Mammary epithelial cell (primary cell): ENCODE measurements at regions of chr20 and their contacts with region 1.

Region 1: GRCh38 chr20:12925214-12925755 is 83.5 kb upstream of the SPTLC3 start:
- DNase-seq: peak; percentile 73
- H3K4me3 ChIP-seq: no peak overlapping the region
- H3K27ac ChIP-seq: no peak overlapping the region
- H3K4me1 ChIP-seq: peaks cover 31% of the 10 kb centered on the region
- H3K27me3 ChIP-seq: no peaks in the 10 kb centered on the region
- CTCF ChIP-seq: peak; percentile 86 to 98

Region 2: GRCh38 chr20:11331096-11331495 is 1594.2 kb before region 1 on chr20:
- CTCF ChIA-PET with region 1: no interaction called
- dilution Hi-C with region 1: no loop called
- in situ Hi-C with region 1: no loop called
- intact Hi-C with region 1: no loop called
- DNase-seq: peak; percentile 83
- H3K4me3 ChIP-seq: no peak overlapping the region
- H3K27ac ChIP-seq: no peak overlapping the region
- H3K4me1 ChIP-seq: peaks cover 8% of the 10 kb centered on the region
- H3K27me3 ChIP-seq: no peaks in the 10 kb centered on the region
- CTCF ChIP-seq: no peak

Region 3: DNA sequence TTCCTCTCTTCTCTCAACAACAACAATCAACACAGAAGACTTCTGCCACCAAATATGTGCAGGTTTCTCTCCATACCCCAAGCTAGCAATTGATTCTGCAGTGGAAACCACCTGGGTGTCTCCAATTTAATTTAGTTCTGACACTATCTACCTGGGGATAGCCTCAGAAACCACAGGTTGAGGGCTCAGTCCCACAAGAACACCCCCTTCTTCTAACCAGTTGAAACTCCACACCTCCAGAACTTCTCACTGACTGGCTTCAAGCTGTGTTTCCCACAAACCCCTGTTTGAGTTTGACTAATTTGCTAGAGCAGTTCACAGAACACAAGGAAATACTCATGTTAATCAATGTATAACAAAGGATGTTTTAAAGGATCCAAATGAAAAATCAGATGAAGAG is 31.0 kb after region 1 on chr20:
- CTCF ChIA-PET with region 1: no interaction called
- dilution Hi-C with region 1: no loop called
- in situ Hi-C with region 1: no loop called
- intact Hi-C with region 1: no loop called
- DNase-seq: no peak
- H3K4me3 ChIP-seq: no peak overlapping the region
- H3K27ac ChIP-seq: no peak overlapping the region
- H3K4me1 ChIP-seq: no peaks in the 10 kb centered on the region
- H3K27me3 ChIP-seq: no peaks in the 10 kb centered on the region
- CTCF ChIP-seq: no peak

Region 4: GRCh38 chr20:13029687-13030510 is 104.6 kb after region 1 on chr20:
- CTCF ChIA-PET with region 1: interaction called, 6 read pairs
- dilution Hi-C with region 1: no loop called
- in situ Hi-C with region 1: no loop called
- intact Hi-C with region 1: loop called (anchors 5 kb)
- DNase-seq: peak; percentile 95
- H3K4me3 ChIP-seq: peak overlapping the region in 1 of 3 experiments; percentile 5
- H3K27ac ChIP-seq: peak overlapping the region; percentile 86
- H3K4me1 ChIP-seq: peaks cover 56% of the 10 kb centered on the region
- H3K27me3 ChIP-seq: no peaks in the 10 kb centered on the region
- CTCF ChIP-seq: no peak

Region 5: GRCh38 chr20:13302647-13303450 is 377.6 kb after region 1 on chr20:
- CTCF ChIA-PET with region 1: interaction called, 3 read pairs
- dilution Hi-C with region 1: no loop called
- in situ Hi-C with region 1: no loop called
- intact Hi-C with region 1: loop called (anchors 5 kb)
- DNase-seq: peak; percentile 30
- H3K4me3 ChIP-seq: no peak overlapping the region
- H3K27ac ChIP-seq: no peak overlapping the region
- H3K4me1 ChIP-seq: peaks cover 14% of the 10 kb centered on the region
- H3K27me3 ChIP-seq: no peaks in the 10 kb centered on the region
- CTCF ChIP-seq: peak; percentile 84

Region 6: DNA sequence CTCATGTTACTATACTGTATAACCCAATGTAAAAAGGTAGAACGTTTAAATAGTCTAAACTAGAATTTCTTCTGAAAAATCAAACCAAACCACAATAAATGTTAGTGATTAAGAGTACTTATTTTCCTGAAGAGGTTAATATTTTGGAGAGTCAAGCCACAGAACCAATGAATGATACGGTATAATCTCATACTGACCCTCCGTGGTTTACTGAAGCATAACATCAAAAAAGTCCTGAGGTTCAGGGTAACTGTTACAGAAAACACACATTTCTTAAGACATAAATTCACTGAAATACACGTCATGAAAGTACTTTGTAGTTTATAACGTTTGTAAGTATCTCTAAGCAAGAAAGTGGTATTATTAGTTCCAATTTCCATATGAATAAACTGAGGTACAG is 830.5 kb after region 1 on chr20:
- CTCF ChIA-PET with region 1: no interaction called
- dilution Hi-C with region 1: no loop called
- in situ Hi-C with region 1: no loop called
- intact Hi-C with region 1: loop called (anchors 5 kb)
- DNase-seq: no peak
- H3K4me3 ChIP-seq: no peak overlapping the region
- H3K27ac ChIP-seq: no peak overlapping the region
- H3K4me1 ChIP-seq: peaks cover 11% of the 10 kb centered on the region
- H3K27me3 ChIP-seq: no peaks in the 10 kb centered on the region
- CTCF ChIP-seq: no peak